Psoas muscle (tissue), 8 donors: ENCODE measurements at regions of chr20 and their contacts with region 1.

Region 1: GRCh38 chr20:53939572-53940359 is 130.6 kb downstream of the BCAS1 start:
- DNase-seq: peak; percentile 89 to 93
- ATAC-seq: peak; percentile 85 to 96 (median 90)
- H3K4me3 ChIP-seq: peak overlapping the region; percentile 17
- H3K27ac ChIP-seq: peak overlapping the region; percentile 2
- H3K4me1 ChIP-seq: peaks cover 3% of the 10 kb centered on the region
- H3K27me3 ChIP-seq: no peaks in the 10 kb centered on the region
- CTCF ChIP-seq: peak; percentile 57

Region 2: GRCh38 chr20:53493311-53493864 is 446.4 kb before region 1 on chr20:
- intact Hi-C with region 1: no loop called
- DNase-seq: no peak
- ATAC-seq: no peak
- H3K4me3 ChIP-seq: no peak overlapping the region
- H3K27ac ChIP-seq: no peak overlapping the region
- H3K4me1 ChIP-seq: no peaks in the 10 kb centered on the region
- H3K27me3 ChIP-seq: peaks cover 0 to 3% (median 0%) of the 10 kb centered on the region in 3 donors
- CTCF ChIP-seq: peak; percentile 5

Region 3: DNA sequence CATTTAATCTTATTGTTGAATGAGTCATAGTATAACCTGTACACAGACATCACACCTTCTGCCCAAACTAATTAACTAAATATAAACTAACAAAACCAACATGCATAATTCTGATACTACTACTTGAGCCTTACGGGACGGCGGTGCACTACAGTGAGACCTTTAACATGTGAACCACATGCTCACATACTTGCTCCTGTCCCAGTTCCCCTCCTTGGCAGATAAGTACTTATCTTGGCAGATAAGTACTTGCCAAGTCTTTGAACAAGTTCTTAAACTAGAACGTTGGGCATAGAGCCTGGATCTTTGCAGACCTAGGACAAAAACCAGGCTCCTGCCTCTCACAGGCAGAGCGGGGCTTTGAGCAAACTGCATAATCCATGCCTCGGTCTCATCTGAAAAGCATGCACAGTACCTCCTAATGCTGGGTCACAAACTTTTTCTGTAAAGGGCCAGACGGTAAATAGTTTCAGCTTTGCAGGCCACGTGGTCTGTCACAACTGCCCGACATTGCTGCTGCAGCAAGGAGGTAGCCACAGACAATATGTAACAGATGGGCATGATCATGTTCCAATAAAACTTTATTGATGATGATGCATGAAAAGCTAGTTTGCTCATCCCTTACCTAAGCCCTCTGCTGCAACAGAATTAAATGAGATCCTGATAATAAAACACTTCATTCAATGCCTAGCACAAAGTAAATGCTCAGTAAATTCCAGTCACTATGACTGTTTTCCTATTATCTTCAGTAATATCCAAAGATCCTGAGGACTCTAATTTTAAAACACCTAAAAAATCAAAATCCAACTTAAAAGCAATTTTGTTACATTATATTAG is 369.0 kb before region 1 on chr20:
- intact Hi-C with region 1: loop called in 1 of 2 experiments (anchors 5 kb)
- DNase-seq: no peak
- ATAC-seq: no peak
- H3K4me3 ChIP-seq: no peak overlapping the region
- H3K27ac ChIP-seq: no peak overlapping the region
- H3K4me1 ChIP-seq: no peaks in the 10 kb centered on the region
- H3K27me3 ChIP-seq: no peaks in the 10 kb centered on the region
- CTCF ChIP-seq: no peak

Region 4: DNA sequence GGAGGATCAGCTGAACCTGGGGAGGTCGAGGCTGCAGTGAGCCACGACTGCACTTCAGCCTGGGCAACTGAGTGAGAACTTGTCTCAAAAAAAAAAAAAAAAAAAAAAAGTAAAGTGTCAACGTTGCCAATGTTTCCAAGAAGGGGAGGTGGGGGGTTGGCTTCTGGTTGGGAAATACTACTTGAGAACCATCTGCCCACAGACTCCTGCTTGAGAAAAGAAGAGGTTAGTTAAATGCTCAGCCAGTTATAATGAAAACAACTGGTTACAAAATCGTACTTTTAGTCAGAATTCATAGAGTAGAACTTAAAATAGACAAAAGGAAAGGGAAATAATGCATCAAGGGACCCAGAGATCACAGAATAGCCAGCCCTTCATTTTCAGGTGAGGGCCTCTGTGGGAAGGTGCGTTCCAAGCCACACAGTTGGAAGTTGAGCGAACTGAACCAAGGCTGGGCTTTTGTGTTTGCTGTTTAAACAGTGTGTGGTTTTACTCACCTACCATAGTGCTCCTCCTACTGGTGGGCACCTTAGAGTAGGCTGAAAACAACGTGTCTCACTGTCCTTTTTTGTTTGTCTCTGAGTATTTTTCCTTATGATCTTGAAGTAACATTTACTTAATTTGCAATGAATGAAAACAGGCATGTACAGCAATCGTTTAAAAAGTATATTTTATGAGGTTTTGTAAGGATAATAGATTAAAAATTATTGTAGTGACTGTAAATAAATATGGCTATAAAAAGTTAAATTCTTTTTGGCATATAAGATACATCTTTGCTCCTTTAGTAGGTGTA is 70.1 kb before region 1 on chr20:
- intact Hi-C with region 1: loop called in 1 of 2 experiments (anchors 2 kb)
- DNase-seq: peak in 1 of 2 donors; percentile 31
- ATAC-seq: peak; percentile 65 to 80 (median 74)
- H3K4me3 ChIP-seq: no peak overlapping the region
- H3K27ac ChIP-seq: no peak overlapping the region
- H3K4me1 ChIP-seq: peaks cover 8% of the 10 kb centered on the region
- H3K27me3 ChIP-seq: no peaks in the 10 kb centered on the region
- CTCF ChIP-seq: peak; percentile 66

Region 5: DNA sequence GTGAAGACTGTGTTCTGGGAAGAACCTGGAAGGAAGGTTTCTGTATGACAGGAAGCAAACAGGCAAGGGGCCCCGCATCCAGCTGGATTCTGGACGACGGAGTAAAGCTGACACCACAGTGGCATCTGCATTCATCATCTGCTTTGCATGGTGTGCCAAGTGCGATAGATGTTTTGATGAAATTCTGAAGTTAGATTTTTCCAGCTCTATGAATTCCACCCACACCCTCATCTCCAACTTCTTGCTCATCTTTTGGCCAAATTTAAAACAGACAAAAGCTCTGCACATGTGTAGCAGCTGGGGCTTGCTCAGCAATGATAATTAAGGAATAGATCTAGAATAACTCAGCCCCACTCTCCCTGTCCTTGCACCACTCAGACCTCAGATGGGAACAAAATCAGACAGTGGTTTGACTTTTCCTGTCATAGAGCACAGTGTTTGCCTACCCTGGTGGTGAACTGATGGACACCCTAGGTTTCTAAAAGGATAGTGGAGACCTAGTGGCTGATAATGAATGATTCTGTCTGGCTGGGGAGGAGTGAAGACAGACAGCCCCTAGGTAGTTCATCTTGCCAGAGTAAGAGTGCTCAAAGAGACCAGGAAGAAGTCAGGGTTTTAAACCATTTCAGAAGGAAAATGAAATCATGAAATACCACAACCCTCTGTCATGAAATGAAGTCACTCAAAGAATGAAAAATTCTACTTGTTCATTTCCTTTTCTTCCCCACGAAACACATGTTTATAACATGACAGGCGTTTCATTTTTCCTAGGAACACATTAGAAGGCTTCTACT is 44.8 kb after region 1 on chr20:
- intact Hi-C with region 1: no loop called
- DNase-seq: peak in 1 of 2 donors; percentile 58
- ATAC-seq: peak in 1 of 4 donors; percentile 49
- H3K4me3 ChIP-seq: no peak overlapping the region
- H3K27ac ChIP-seq: no peak overlapping the region
- H3K4me1 ChIP-seq: no peaks in the 10 kb centered on the region
- H3K27me3 ChIP-seq: no peaks in the 10 kb centered on the region
- CTCF ChIP-seq: no peak

Region 6: GRCh38 chr20:54207743-54208547 is 268.2 kb after region 1 on chr20 and contains the start of gene PFDN4:
- intact Hi-C with region 1: loop called in 1 of 2 experiments (anchors 10 kb)
- DNase-seq: peak; percentile 82 to 90
- ATAC-seq: peak; percentile 96 to 98 (median 98)
- H3K4me3 ChIP-seq: peak within 1 kb of the TSS; percentile 99
- H3K27ac ChIP-seq: peak within 1 kb of the TSS; percentile 96
- H3K4me1 ChIP-seq: peaks cover 17% of the 10 kb centered on the region
- H3K27me3 ChIP-seq: no peaks in the 10 kb centered on the region
- CTCF ChIP-seq: peak; percentile 82
- total RNA-seq, gene PFDN4: 15.8 to 26.3 (median 18.9) TPM